ENCODE measurements at regions of chr10 and their contacts with region 1.

Region 1: GRCh38 chr10:102917962-102918816 is at the start of gene CNNM2:
- DNase-seq: peak; percentile 100
- ATAC-seq: peak; percentile 88 to 90
- H3K4me3 ChIP-seq: peak within 1 kb of the TSS; percentile 80 to 95 (median 92)
- H3K27ac ChIP-seq: peak within 1 kb of the TSS; percentile 96 to 98 (median 96)
- H3K4me1 ChIP-seq: peaks cover 30 to 32% of the 10 kb centered on the region in 2 donors
- H3K27me3 ChIP-seq: no peaks in the 10 kb centered on the region
- CTCF ChIP-seq: no peak
- POLR2A ChIP-seq: peak; percentile 57 to 65
- total RNA-seq, gene CNNM2: 1.1 to 3.2 (median 2.0) TPM

Region 2: DNA sequence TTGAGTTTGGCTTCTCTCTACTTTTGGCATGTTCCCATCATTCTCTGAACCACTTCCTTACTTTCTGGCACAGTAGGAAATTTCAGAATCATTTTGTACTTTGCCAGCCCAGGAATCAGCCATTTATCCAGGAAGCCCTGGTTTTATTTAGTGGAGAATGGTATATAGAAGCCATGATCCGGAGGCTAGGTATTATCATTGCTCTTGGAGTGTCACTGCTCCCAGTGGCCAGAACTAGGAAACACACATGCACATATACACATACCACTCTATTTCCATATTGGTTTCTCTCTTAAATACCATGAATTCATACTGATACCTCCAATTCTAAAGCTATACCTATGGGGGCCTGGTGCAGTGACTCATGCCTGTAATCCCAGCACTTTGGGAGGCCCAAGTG is 378.2 kb before region 1 on chr10:
- in situ Hi-C with region 1: no loop called
- intact Hi-C with region 1: no loop called
- DNase-seq: no peak
- ATAC-seq: no peak
- H3K4me3 ChIP-seq: no peak overlapping the region
- H3K27ac ChIP-seq: no peak overlapping the region
- H3K4me1 ChIP-seq: peaks cover 0 to 4% of the 10 kb centered on the region in 2 donors
- H3K27me3 ChIP-seq: no peaks in the 10 kb centered on the region
- CTCF ChIP-seq: peak in 1 of 5 experiments; percentile 10
- POLR2A ChIP-seq: no peak

Region 3: GRCh38 chr10:103062604-103063590 is 144.7 kb after region 1 on chr10:
- in situ Hi-C with region 1: loop called in 2 of 4 experiments (anchors 5 to 10 kb)
- intact Hi-C with region 1: no loop called
- DNase-seq: no peak
- ATAC-seq: no peak
- H3K4me3 ChIP-seq: no peak overlapping the region
- H3K27ac ChIP-seq: no peak overlapping the region
- H3K4me1 ChIP-seq: no peaks in the 10 kb centered on the region
- H3K27me3 ChIP-seq: no peaks in the 10 kb centered on the region
- CTCF ChIP-seq: no peak
- POLR2A ChIP-seq: no peak

Region 4: DNA sequence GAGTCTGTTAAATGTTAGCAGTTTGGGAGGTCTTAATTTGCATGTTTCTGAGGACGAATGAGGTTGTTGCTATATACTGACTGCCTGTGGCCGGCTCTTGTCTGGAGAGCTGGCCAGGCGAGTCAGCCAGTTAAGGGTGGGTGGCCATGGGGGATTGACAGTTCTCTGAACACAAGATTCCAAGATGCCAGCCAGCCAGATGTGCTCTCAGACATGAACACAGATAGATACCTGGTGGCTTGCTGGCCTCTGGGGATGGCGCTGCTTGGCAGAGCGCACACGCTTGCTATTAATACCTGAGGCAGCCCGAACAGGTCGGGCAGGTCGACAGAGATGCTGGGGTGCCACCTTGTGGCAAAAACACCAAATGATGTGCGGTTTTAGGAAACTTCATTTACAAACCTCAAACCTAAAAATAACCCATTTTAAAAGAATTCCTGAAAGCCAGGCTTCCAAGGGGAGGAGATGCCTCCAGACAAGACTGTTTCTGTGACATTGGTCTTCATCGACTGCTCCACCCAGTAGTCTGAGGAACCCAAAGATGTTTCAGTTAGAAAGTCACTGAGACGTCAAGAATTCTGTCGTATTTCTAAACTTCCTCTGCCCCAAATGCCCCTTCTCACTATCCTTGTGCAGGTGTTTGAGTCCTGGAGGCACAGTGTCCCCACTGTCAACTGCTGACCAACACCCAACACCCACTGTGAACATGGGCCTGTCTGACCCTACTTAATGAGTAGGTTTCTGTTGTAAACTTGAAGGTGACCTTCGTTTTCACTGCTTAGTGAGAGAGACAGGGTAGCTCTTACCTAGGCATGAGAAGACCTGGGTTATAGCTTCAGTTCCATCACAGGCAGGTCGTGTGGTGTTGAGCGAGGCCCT is 151.5 kb after region 1 on chr10:
- in situ Hi-C with region 1: loop called in 2 of 4 experiments (anchors 5 to 10 kb)
- intact Hi-C with region 1: loop called (anchors 1 kb)
- DNase-seq: peak in 1 of 2 donors; percentile 49
- ATAC-seq: peak in 1 of 2 donors; percentile 66
- H3K4me3 ChIP-seq: no peak overlapping the region
- H3K27ac ChIP-seq: no peak overlapping the region
- H3K4me1 ChIP-seq: no peaks in the 10 kb centered on the region
- H3K27me3 ChIP-seq: no peaks in the 10 kb centered on the region
- CTCF ChIP-seq: peak; percentile 11 to 66 (median 58)
- POLR2A ChIP-seq: no peak

Region 5: DNA sequence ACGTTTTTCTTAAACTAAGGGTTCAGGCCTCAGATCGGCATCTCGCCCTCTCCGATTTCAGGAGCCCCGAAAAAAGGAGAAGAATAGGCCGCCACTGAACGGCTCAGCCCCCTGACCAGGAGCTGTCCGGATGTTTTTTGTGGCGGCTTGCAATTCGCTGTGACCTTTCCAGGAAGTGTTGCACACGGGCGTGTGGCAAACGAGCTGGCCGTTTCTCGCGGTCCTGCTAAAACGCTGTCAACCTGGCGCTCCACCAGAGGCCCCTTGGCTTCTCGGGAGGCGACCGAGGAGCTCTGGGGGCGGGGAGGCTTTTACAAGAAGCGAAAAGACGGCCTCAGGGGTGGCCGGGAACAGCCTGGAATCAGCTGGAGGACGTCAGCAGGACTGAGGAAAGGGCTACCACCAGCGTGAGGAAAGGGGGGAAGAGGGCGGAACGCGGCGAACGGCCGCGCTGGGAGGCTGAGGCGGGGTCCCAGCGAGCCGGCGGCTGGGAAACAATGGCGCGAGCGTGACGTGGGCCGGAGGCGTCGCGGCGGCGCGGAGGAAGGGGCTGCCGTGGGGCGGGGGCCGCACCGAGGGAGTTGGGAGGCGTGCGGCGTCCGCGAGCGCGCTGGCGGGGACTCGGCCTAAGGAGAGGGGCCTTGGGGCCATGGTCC is 274.4 kb after region 1 on chr10:
- in situ Hi-C with region 1: no loop called
- intact Hi-C with region 1: loop called (anchors 2 kb)
- DNase-seq: peak; percentile 61 to 84
- ATAC-seq: peak; percentile 65 to 69
- H3K4me3 ChIP-seq: peak overlapping the region; percentile 80 to 99 (median 89)
- H3K27ac ChIP-seq: peak overlapping the region; percentile 96 to 99 (median 98)
- H3K4me1 ChIP-seq: peaks cover 63 to 65% of the 10 kb centered on the region in 2 donors
- H3K27me3 ChIP-seq: no peaks in the 10 kb centered on the region
- CTCF ChIP-seq: no peak
- POLR2A ChIP-seq: no peak

Region 6: GRCh38 chr10:103244663-103245271 is 326.6 kb after region 1 on chr10:
- in situ Hi-C with region 1: loop called (anchors 5 kb)
- intact Hi-C with region 1: loop called (anchors 1 kb)
- DNase-seq: peak; percentile 50 to 79
- ATAC-seq: peak; percentile 69 to 82
- H3K4me3 ChIP-seq: no peak overlapping the region
- H3K27ac ChIP-seq: no peak overlapping the region
- H3K4me1 ChIP-seq: peaks cover 19% of the 10 kb centered on the region in 2 donors
- H3K27me3 ChIP-seq: no peaks in the 10 kb centered on the region
- CTCF ChIP-seq: peak; percentile 90 to 91 (median 91)
- POLR2A ChIP-seq: no peak

Region 7: DNA sequence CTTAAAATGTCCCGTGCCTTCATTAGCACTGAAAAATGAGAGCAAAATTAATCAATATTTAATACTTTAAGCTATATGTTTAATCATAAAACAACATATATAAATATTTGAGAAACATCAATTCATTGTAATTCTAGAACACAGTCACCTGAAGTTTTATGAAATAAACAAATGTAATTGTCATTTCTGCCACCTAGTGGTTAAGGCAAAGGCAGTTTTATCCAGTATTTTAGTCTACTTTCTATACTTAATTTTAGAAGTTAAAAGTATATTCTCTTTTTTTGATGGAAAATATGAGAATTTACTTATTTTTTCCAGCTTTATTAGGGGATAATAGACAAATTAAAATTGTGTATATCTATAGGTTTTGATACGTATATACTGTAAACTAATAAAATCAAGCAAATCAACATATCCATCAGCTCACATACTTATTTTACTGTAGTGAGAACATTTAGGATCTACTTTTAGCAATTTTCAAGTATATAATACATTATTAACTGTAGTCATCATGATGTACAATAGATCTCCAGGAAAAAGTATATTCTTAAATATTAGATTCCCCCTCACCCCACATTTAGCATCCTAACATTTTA is 415.8 kb after region 1 on chr10:
- in situ Hi-C with region 1: no loop called
- intact Hi-C with region 1: loop called (anchors 1 kb)
- DNase-seq: no peak
- ATAC-seq: no peak
- H3K4me3 ChIP-seq: no peak overlapping the region
- H3K27ac ChIP-seq: no peak overlapping the region
- H3K4me1 ChIP-seq: no peaks in the 10 kb centered on the region
- H3K27me3 ChIP-seq: no peaks in the 10 kb centered on the region
- CTCF ChIP-seq: peak; percentile 36 to 61 (median 49)
- POLR2A ChIP-seq: no peak

Region 8: DNA sequence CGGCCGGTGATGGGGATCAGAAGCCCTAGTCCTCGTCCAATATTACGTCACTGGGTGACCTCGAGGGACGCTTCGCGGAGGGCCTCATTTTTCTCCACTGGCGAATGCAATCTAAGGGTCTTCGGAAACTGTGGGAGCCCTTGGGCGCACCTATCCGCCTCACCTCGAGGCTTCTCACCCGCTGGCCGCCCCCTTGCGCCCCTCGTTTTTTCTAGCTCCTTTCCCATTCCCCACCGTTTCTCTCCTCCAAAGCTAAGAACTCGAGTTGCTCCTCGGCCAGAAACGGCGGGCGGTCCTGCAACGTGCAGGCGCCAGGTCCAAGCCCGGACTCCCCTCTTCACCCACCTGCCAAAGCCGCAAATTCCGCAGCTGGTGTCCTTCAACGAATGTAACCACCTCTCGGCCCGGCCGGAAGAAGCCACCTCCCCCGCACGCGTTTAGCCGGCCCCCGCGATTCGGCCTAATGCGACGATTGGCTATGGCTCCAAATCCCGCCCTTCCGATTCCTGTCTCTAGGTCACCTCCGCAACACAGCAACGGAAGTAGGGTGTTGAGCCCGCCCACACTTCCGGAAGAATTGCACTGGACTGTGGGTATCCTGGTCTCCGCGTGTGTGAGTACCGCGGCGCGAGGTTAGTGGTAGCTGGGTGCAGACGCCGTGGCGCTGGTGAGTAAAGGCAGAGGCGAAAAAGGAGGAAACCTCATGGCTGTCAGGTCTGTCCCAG is 478.0 kb after region 1 on chr10 and contains the starts of genes ATP5MK and PDCD11:
- in situ Hi-C with region 1: no loop called
- intact Hi-C with region 1: loop called (anchors 5 kb)
- DNase-seq: peak; percentile 96 to 98
- ATAC-seq: peak; percentile 99 to 100
- H3K4me3 ChIP-seq: peak within 1 kb of the TSS; percentile 88 to 96 (median 94)
- H3K27ac ChIP-seq: peak within 1 kb of the TSS; percentile 91 to 97 (median 94)
- H3K4me1 ChIP-seq: peaks cover 39 to 43% of the 10 kb centered on the region in 2 donors
- H3K27me3 ChIP-seq: no peaks in the 10 kb centered on the region
- CTCF ChIP-seq: peak in 2 of 5 experiments; percentile 12 to 22
- POLR2A ChIP-seq: peak; percentile 65 to 78
- total RNA-seq, gene ATP5MK: 436 to 724 (median 552) TPM
- total RNA-seq, gene PDCD11: 16.7 to 22.7 (median 19.5) TPM

Measured in gastrocnemius medialis (tissue), 4 donors.